Endothelial cell of umbilical vein (primary cell): ENCODE measurements at regions of chr4 and their contacts with region 1.

Region 1: DNA sequence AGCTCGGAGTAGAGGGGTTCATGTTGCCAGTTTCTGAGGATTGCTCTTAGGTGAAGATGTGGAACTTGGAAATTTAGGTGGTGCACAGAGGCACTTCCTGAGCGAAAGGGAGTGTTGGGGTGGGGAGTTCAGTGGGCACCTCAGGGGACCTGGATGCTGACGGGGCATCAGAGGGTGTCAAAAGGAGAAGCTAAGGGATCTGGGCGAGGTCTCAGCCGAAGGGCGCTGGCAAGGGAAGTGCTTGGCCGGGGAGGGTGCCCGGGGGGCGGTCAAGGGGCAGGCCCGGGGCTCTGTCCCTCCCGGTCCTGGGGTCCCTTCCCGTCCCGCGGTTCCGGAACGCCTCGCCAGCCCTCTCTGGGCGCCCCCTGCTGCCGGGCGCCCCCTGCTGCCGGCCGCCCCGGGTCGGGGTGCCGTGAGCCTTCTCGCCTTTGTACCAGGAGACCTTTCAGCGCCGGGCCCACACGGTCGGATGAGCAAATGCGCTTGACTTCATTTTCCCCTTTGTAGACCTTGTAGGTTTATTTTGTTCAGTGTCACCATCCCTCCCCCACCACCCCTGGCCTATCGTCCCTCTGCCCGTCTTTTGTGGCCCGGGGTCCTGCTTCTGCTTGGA is 3.0 kb upstream of the PHOX2B start:
- DNase-seq: no peak
- H3K4me3 ChIP-seq: no peak overlapping the region
- H3K27ac ChIP-seq: no peak overlapping the region
- H3K4me1 ChIP-seq: no peaks in the 10 kb centered on the region
- H3K27me3 ChIP-seq: peaks cover 93 to 100% of the 10 kb centered on the region in 2 experiments
- CTCF ChIP-seq: peak; percentile 5 to 15
- POLR2A ChIP-seq: no peak

Region 2: GRCh38 chr4:41882625-41883347 is 131.2 kb after region 1 on chr4:
- CTCF ChIA-PET with region 1: no interaction called
- POLR2A ChIA-PET with region 1: no interaction called
- dilution Hi-C with region 1: no loop called
- intact Hi-C with region 1: loop called (anchors 5 kb)
- DNase-seq: peak; percentile 35
- H3K4me3 ChIP-seq: no peak overlapping the region
- H3K27ac ChIP-seq: no peak overlapping the region
- H3K4me1 ChIP-seq: peaks cover 6% of the 10 kb centered on the region
- H3K27me3 ChIP-seq: peaks cover 51 to 90% of the 10 kb centered on the region in 2 experiments
- CTCF ChIP-seq: peak; percentile 89 to 90
- POLR2A ChIP-seq: no peak